H1 (cell line): ENCODE measurements at regions of chr18 and their contacts with region 1.

Region 1: GRCh38 chr18:34261865-34262780 is 37.4 kb upstream of the NOL4 start:
- DNase-seq: no peak
- H3K4me3 ChIP-seq: no peak overlapping the region
- H3K27ac ChIP-seq: no peak overlapping the region
- H3K4me1 ChIP-seq: no peaks in the 10 kb centered on the region; a peak in 1 of 7 replicates
- H3K27me3 ChIP-seq: no peaks in the 10 kb centered on the region
- CTCF ChIP-seq: no peak
- EP300 ChIP-seq: no peak
- POLR2A ChIP-seq: no peak
- RAD21 ChIP-seq: no peak

Region 2: DNA sequence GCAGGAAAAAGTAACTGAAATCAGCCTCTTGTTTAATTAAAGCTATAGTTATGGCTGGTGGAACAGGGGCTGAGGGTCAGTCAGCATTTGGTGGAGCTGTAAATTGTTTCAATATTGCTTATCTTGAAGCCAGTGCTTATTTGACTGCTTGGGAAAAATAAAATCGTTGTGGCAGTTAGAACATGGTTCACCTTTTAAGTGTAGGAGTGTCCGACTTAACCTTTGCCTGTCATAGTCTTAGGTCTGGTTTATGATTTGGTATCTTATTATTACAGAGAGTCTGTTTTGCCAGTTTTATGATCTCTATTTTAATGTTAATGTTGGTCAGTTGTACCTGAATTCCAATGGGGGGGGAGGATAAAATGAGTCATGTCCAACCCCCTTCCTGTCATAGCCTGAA is 10.2 kb before region 1 on chr18:
- CTCF ChIA-PET with region 1: interaction called, 12 read pairs
- POLR2A ChIA-PET with region 1: no interaction called
- DNase-seq: no peak
- H3K4me3 ChIP-seq: no peak overlapping the region
- H3K27ac ChIP-seq: no peak overlapping the region
- H3K4me1 ChIP-seq: no peaks in the 10 kb centered on the region
- H3K27me3 ChIP-seq: peaks cover 0 to 2% (median 0%) of the 10 kb centered on the region in 4 experiments; a peak in 1 of 7 replicates
- CTCF ChIP-seq: no peak
- EP300 ChIP-seq: no peak
- POLR2A ChIP-seq: no peak
- RAD21 ChIP-seq: no peak

Region 3: GRCh38 chr18:34281722-34282121 is 19.6 kb after region 1 on chr18:
- CTCF ChIA-PET with region 1: interaction called, 12 read pairs
- POLR2A ChIA-PET with region 1: no interaction called
- DNase-seq: no peak
- H3K4me3 ChIP-seq: no peak overlapping the region
- H3K27ac ChIP-seq: no peak overlapping the region
- H3K4me1 ChIP-seq: no peaks in the 10 kb centered on the region
- H3K27me3 ChIP-seq: no peaks in the 10 kb centered on the region
- CTCF ChIP-seq: no peak
- EP300 ChIP-seq: no peak
- POLR2A ChIP-seq: no peak
- RAD21 ChIP-seq: no peak

Region 4: GRCh38 chr18:34352385-34353163 is 90.5 kb after region 1 on chr18:
- CTCF ChIA-PET with region 1: no interaction called
- POLR2A ChIA-PET with region 1: no interaction called
- DNase-seq: no peak
- H3K4me3 ChIP-seq: no peak overlapping the region
- H3K27ac ChIP-seq: no peak overlapping the region
- H3K4me1 ChIP-seq: no peaks in the 10 kb centered on the region
- H3K27me3 ChIP-seq: no peaks in the 10 kb centered on the region
- CTCF ChIP-seq: peak in 2 of 3 experiments; percentile 28 to 42; a peak in 2 of 4 replicates
- EP300 ChIP-seq: no peak
- POLR2A ChIP-seq: no peak
- RAD21 ChIP-seq: peak; percentile 64 to 71

Region 5: GRCh38 chr18:34550902-34551301 is 288.8 kb after region 1 on chr18:
- CTCF ChIA-PET with region 1: no interaction called
- POLR2A ChIA-PET with region 1: no interaction called
- DNase-seq: no peak
- H3K4me3 ChIP-seq: no peak overlapping the region
- H3K27ac ChIP-seq: no peak overlapping the region
- H3K4me1 ChIP-seq: peaks cover 2 to 30% (median 14%) of the 10 kb centered on the region in 4 experiments; a peak in 4 of 7 replicates
- H3K27me3 ChIP-seq: no peaks in the 10 kb centered on the region
- CTCF ChIP-seq: no peak
- EP300 ChIP-seq: no peak
- POLR2A ChIP-seq: no peak
- RAD21 ChIP-seq: no peak